ENCODE measurements at regions of chr10 and their contacts with region 1.

Region 1: GRCh38 chr10:102904346-102904745 is 13.7 kb upstream of the CNNM2 start:
- DNase-seq: no peak
- H3K4me3 ChIP-seq: no peak overlapping the region
- H3K27ac ChIP-seq: no peak overlapping the region
- H3K27me3 ChIP-seq: no peaks in the 10 kb centered on the region
- CTCF ChIP-seq: no peak

Region 2: GRCh38 chr10:102698894-102699293 is 205.5 kb before region 1 on chr10:
- CTCF ChIA-PET with region 1: no interaction called
- POLR2A ChIA-PET with region 1: no interaction called
- DNase-seq: no peak
- H3K4me3 ChIP-seq: no peak overlapping the region
- H3K27ac ChIP-seq: no peak overlapping the region
- H3K27me3 ChIP-seq: no peaks in the 10 kb centered on the region
- CTCF ChIP-seq: no peak

Region 3: GRCh38 chr10:102729029-102730026 is 175.0 kb before region 1 on chr10:
- CTCF ChIA-PET with region 1: interaction called, 40 read pairs
- POLR2A ChIA-PET with region 1: no interaction called
- DNase-seq: no peak
- H3K4me3 ChIP-seq: no peak overlapping the region
- H3K27ac ChIP-seq: no peak overlapping the region
- H3K27me3 ChIP-seq: no peaks in the 10 kb centered on the region
- CTCF ChIP-seq: peak; percentile 93

Region 4: DNA sequence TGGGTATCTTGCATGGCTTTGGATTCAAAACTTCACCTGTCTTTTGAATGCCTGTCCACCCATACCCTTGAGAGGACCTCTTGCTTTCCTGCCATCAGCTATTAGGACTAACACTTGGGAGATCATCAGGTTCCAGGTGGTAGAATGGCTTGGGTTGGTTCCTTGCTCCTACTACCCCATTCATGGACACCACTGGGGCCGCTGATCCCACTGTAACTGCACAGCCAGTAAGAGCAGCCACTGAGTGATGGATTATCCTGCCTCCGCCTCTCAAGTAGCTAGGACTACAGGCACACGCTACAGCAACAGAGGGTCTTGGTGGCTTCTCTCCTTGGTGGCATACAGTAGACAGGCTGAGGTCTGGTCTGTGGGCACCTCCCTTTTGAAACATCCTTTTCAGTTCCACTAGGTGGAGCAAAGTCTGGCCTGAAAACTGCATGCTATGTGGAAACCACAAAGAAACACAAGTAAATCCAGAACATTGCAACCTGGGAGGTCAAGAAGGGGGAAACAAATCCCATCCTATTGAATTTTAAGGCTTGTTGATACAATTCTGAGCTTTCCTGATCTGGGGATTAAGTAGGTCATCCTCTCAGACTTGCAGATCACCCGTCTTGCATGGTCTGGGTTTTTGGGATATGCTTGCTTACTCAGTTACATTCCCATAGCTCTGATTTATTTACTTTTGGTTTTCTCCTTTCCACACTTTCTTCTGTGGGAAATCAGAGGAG is 151.2 kb before region 1 on chr10:
- CTCF ChIA-PET with region 1: interaction called, 19 read pairs
- POLR2A ChIA-PET with region 1: no interaction called
- DNase-seq: peak; percentile 59
- H3K4me3 ChIP-seq: no peak overlapping the region
- H3K27ac ChIP-seq: peak overlapping the region; percentile 52
- H3K27me3 ChIP-seq: no peaks in the 10 kb centered on the region
- CTCF ChIP-seq: peak; percentile 75

Region 5: DNA sequence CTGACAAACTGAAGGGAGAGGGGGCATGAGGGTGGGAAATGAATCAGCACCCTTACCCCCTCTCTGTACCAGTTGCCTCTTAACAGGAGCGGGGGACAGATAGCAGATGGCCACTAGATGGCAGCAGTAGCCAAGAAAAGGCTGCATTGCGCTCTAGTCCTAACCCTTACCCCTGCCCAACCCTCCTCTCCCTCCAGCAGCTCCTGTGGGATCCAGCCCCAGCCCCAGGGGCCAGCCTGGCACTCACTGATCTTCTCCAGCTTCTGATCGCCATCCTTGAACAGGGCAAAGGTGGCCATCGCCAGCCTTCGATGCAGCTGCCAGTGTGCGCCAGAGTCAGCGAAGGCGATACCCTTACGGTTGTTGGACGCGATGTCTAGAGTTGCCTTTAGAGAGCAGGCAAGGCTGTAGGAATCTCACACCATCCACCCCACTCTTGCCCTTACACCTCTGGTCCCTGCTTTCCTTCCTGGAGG is 69.3 kb before region 1 on chr10:
- CTCF ChIA-PET with region 1: interaction called, 151 read pairs
- POLR2A ChIA-PET with region 1: interaction called, 6 read pairs
- DNase-seq: peak; percentile 59
- H3K4me3 ChIP-seq: no peak overlapping the region
- H3K27ac ChIP-seq: no peak overlapping the region
- H3K27me3 ChIP-seq: peaks cover 2% of the 10 kb centered on the region
- CTCF ChIP-seq: peak; percentile 92

Region 6: GRCh38 chr10:102888048-102888447 is 16.3 kb before region 1 on chr10:
- CTCF ChIA-PET with region 1: interaction called, 17 read pairs
- POLR2A ChIA-PET with region 1: no interaction called
- DNase-seq: no peak
- H3K4me3 ChIP-seq: no peak overlapping the region
- H3K27ac ChIP-seq: no peak overlapping the region
- H3K27me3 ChIP-seq: no peaks in the 10 kb centered on the region
- CTCF ChIP-seq: no peak

Measured in AG04450 (cell line).